ENCODE measurements at regions of chr15 and their contacts with region 1.

Region 1: DNA sequence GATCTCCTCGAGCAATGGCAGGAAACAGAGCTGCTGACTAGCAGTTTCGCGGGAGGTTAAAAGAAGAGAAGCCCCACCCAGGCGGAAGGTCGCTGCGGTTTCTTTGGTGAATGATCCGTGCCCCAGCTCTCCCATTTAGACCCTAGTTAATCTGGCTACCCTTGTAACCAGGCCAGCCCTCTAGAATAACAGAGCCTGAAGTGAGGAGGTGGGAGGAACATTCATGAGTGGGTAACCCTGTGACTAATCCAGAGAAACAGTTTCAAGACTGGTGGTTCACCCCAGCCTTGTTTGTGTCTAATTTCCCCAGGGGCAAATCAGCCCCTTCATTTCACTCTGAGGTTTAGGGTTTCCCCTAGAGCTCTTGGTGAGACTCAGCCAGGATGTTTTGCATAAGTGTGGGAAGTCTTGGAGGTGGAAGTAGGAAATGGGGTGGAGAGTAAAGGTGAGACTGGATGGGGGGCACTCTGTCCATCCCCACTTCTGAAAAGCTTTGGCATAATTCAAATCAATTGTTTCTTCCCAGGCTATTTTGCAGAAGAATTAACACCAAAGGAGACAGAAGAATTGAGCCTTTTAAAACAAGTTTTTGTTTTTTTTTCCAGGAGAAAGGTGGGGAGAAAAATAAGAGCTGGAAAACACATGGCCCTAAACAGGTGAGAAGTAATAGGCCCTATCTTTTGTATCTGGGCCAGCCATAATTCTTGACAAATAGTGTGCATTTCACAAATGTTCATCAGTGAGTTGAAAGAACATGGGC is 303.1 kb downstream of the RPLP1 start:
- DNase-seq: no peak
- H3K4me3 ChIP-seq: no peak overlapping the region
- H3K27ac ChIP-seq: no peak overlapping the region
- H3K4me1 ChIP-seq: peaks cover 39% of the 10 kb centered on the region
- H3K27me3 ChIP-seq: no peaks in the 10 kb centered on the region
- CTCF ChIP-seq: no peak

Region 2: GRCh38 chr15:68650901-68651709 is 1104.6 kb before region 1 on chr15:
- CTCF ChIA-PET with region 1: no interaction called
- POLR2A ChIA-PET with region 1: no interaction called
- intact Hi-C with region 1: no loop called
- DNase-seq: peak in 1 of 2 experiments; percentile 31
- H3K4me3 ChIP-seq: no peak overlapping the region
- H3K27ac ChIP-seq: no peak overlapping the region
- H3K4me1 ChIP-seq: no peaks in the 10 kb centered on the region
- H3K27me3 ChIP-seq: no peaks in the 10 kb centered on the region
- CTCF ChIP-seq: peak; percentile 66

Region 3: DNA sequence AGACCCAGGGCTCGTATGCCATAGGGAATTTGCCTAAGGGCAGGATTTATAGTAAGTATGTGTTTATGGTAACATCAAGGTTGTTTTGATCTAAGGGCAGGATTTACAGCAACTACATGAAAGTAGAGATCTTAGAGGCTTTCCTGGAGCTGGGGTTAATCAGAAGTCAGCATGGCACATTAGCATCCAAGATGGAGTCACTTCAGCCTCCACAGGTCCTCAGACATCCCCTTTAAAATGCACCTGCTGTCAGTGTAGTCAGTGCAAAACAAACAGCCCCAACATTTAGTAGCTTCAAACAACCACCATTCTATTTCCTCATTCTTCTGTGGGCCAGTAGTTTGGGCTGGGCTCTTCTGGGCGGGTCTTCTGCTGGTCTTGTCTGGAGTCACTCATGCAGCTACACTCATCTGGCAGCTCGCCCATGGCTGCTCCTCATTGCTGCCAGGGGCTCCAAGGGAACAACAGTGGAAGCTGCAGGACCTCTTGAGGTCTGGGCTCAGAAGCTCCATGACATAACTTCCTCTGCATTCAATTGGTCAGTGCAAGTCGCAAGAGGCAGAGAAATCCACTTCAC is 242.1 kb after region 1 on chr15:
- CTCF ChIA-PET with region 1: interaction called, 3 read pairs
- POLR2A ChIA-PET with region 1: no interaction called
- intact Hi-C with region 1: loop called (anchors 5 kb)
- DNase-seq: peak; percentile 91 to 94
- H3K4me3 ChIP-seq: no peak overlapping the region
- H3K27ac ChIP-seq: no peak overlapping the region
- H3K4me1 ChIP-seq: peaks cover 19% of the 10 kb centered on the region
- H3K27me3 ChIP-seq: no peaks in the 10 kb centered on the region
- CTCF ChIP-seq: no peak

Region 4: DNA sequence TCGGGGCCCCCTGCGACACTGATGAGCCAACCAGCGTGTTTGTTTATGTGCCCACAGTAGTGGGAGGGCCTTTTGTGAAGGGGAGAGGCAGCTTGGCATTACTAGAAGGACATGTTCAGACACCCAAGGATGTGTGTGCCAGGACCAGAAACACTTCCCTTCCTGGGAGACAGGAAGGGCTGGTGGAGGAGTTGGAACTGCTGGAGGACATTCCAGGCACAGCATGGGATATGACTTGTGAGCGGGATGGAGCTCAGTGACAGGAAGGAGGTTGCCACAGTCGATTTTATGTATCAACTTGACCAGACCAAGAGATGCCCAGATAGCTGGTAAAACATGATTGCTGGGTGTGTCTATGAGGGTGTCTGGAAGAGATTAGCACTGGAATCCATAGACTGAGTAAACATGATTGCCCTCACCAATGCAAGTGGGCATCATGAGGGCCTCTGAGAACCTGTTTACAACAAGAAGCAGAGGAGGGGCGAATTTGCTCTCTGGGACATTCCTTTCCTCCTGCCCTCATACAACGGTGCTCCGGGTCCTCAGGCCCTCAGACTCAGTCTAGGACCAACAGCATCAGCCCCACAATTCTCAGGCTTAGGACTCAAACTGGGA is 448.4 kb after region 1 on chr15:
- CTCF ChIA-PET with region 1: interaction called, 12 read pairs
- POLR2A ChIA-PET with region 1: no interaction called
- intact Hi-C with region 1: no loop called
- DNase-seq: no peak
- H3K4me3 ChIP-seq: no peak overlapping the region
- H3K27ac ChIP-seq: no peak overlapping the region
- H3K4me1 ChIP-seq: 0 out of 2 replicates have a peak, but pooled peaks cover 5% of the 10 kb centered on the region
- H3K27me3 ChIP-seq: no peaks in the 10 kb centered on the region
- CTCF ChIP-seq: no peak

Measured in PC-9 (cell line).